BJ (cell line): ENCODE measurements at regions of chr17 and their contacts with region 1.

Region 1: DNA sequence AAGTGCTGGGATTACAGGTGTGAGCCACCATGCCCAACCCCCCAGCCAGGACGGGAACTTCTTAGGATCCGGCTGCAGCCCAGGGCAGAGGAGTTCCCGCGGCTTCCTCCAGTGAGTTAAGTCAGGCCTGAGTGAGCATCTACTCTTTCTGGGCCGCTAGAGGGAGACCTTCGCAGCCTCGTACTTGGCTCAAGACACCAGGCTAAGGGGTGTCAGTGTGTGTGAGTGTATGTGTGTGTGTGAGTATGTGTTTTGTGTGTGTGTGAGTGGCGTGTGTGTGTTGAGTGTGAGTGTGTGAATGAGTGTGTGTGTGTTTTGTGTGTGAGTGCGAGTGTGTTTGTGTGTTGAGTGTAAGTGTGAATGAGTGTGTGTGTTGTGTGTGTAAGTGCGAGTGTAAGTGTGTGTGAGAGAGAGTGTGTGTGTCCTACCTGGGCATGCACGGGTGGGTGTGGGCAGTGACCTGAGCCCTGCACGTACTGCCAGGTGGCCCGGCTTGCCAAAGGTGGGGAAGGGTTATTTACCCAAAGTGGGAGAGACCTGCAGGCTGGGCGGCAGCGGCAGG is 58.5 kb downstream of the TMEM235 start:
- DNase-seq: peak; percentile 43
- H3K4me3 ChIP-seq: no peak overlapping the region
- H3K27me3 ChIP-seq: no peaks in the 10 kb centered on the region
- CTCF ChIP-seq: peak; percentile 79

Region 2: DNA sequence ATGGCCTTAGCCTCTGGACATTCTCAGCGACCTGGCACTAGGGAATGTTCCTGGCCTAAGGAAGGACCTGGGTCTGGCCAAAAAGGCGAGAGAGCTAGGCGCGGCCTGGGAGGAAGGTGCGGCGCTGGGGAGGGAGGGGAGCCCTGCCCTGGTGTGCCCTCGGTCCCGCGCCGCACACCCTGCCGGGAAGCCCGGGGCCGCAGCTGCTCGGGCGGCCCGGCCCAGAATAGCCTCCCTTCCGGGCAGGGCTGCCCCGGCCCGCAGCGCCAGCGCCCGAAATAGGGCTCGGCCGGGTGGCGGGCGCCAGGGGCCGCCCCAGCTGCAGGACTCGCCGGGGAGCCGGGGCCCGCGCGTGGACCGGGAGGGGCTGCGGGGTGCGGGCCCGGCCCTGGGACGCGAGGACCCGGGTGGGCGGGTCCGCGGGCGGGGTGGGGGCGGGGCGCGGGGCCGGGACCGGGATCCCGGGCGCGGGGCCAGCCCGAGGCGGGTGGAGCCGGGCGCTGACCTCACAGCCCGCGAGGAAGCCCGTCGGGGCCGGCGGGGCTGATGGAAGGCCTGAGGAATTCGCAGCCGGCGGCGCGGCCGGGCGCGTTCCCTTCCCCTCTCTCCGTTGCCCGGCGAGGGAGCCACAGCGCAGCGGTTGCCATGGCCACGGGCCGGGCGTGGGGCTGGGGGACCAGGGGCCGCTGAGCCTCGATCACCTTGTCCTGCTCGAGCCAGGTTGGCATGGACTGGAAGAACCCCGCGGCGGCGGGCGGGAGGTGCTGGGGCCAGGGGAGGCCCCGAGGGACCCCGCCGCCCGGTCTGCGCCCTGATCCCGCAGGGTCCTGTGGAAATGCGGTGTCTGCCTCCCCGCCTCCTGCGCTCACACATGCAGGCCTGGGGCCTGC is 51.9 kb after region 1 on chr17:
- CTCF ChIA-PET with region 1: interaction called, 10 read pairs
- POLR2A ChIA-PET with region 1: no interaction called
- DNase-seq: no peak
- H3K4me3 ChIP-seq: peak overlapping the region; percentile 44
- H3K27me3 ChIP-seq: no peaks in the 10 kb centered on the region
- CTCF ChIP-seq: no peak